ENCODE measurements at regions of chr1 and their contacts with region 1.

Region 1: GRCh38 chr1:153990468-153991150 is at the start of gene RPS27:
- DNase-seq: peak; percentile 100
- H3K4me3 Mint-ChIP-seq: peak within 1 kb of the TSS; percentile 90
- H3K27ac Mint-ChIP-seq: peak within 1 kb of the TSS; percentile 98
- H3K4me1 Mint-ChIP-seq: peaks cover 33% of the 10 kb centered on the region
- H3K27me3 Mint-ChIP-seq: no peaks in the 10 kb centered on the region
- CTCF ChIP-seq: no peak
- total RNA-seq, gene RPS27: 3,026 and 3,064 TPM in 2 replicates

Region 2: GRCh38 chr1:153532769-153533599 is 457.6 kb before region 1 on chr1:
- CTCF ChIA-PET with region 1: interaction called, 4 read pairs
- POLR2A ChIA-PET with region 1: interaction called, 11 read pairs
- intact Hi-C with region 1: no loop called
- DNase-seq: peak; percentile 97
- H3K4me3 Mint-ChIP-seq: peak overlapping the region; percentile 99
- H3K27ac Mint-ChIP-seq: peak overlapping the region; percentile 75
- H3K4me1 Mint-ChIP-seq: peaks cover 47% of the 10 kb centered on the region
- H3K27me3 Mint-ChIP-seq: no peaks in the 10 kb centered on the region
- CTCF ChIP-seq: peak; percentile 93

Region 3: GRCh38 chr1:153670859-153671627 is 319.6 kb before region 1 on chr1 and contains the start of gene ILF2:
- CTCF ChIA-PET with region 1: interaction called, 24 read pairs
- POLR2A ChIA-PET with region 1: interaction called, 15 read pairs
- intact Hi-C with region 1: no loop called
- DNase-seq: peak; percentile 100
- H3K4me3 Mint-ChIP-seq: no peak within 1 kb of the TSS
- H3K27ac Mint-ChIP-seq: no peak within 1 kb of the TSS
- H3K4me1 Mint-ChIP-seq: peaks cover 5% of the 10 kb centered on the region
- H3K27me3 Mint-ChIP-seq: no peaks in the 10 kb centered on the region
- CTCF ChIP-seq: peak; percentile 27
- total RNA-seq, gene ILF2: 348 and 374 TPM in 2 replicates

Region 4: DNA sequence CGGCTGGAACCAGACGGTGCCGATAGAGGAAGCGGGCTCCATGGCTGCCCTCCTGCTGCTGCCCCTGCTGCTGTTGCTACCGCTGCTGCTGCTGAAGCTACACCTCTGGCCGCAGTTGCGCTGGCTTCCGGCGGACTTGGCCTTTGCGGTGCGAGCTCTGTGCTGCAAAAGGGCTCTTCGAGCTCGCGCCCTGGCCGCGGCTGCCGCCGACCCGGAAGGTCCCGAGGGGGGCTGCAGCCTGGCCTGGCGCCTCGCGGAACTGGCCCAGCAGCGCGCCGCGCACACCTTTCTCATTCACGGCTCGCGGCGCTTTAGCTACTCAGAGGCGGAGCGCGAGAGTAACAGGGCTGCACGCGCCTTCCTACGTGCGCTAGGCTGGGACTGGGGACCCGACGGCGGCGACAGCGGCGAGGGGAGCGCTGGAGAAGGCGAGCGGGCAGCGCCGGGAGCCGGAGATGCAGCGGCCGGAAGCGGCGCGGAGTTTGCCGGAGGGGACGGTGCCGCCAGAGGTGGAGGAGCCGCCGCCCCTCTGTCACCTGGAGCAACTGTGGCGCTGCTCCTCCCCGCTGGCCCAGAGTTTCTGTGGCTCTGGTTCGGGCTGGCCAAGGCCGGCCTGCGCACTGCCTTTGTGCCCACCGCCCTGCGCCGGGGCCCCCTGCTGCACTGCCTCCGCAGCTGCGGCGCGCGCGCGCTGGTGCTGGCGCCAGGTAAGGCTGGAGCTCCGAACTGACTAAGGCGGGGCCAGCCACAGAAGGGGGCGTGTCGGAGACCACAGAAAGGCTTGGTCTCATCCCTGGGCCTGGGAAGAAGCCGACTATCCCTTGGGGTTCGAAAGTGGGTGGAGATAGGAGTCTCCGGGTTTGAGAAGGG is 214.9 kb before region 1 on chr1:
- CTCF ChIA-PET with region 1: interaction called, 6 read pairs
- POLR2A ChIA-PET with region 1: interaction called, 18 read pairs
- intact Hi-C with region 1: loop called (anchors 1 kb)
- DNase-seq: peak; percentile 81
- H3K4me3 Mint-ChIP-seq: peak overlapping the region; percentile 70
- H3K27ac Mint-ChIP-seq: peak overlapping the region; percentile 68
- H3K4me1 Mint-ChIP-seq: peaks cover 36% of the 10 kb centered on the region
- H3K27me3 Mint-ChIP-seq: no peaks in the 10 kb centered on the region
- CTCF ChIP-seq: no peak

Region 5: DNA sequence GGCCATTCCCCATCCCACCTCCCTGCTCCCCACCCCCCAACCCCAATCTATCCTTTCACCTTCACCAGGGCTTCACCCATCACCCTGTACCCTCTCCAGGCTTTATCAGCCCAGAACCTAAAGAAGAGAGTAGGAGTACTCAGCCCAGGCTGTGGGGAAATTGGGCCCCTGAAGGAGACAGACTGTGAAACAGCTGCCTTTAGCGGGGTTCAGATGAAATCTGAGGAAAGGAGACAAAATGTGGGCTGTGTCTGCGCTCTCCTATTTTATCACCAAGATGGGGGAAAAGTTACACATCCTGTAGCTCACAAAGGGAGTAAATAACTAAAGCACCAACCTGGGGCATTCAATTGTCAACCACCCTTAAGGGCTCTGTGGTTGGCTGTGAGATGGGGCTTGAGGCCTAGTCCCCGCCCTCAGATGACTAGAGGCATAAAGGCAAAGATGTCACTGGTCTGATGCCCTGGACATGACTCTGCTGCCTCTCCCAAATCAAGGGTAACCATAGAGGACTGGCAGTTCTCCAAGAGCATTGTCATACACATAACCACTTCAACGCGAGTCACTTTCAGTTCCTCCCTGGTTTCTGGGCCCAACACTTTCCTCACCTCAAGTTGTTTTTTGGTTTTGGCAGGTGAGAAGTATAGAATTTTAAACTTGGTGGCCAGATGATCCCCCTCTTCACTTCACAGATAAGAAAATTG is 185.4 kb before region 1 on chr1:
- CTCF ChIA-PET with region 1: interaction called, 22 read pairs
- POLR2A ChIA-PET with region 1: interaction called, 9 read pairs
- intact Hi-C with region 1: no loop called
- DNase-seq: peak; percentile 95
- H3K4me3 Mint-ChIP-seq: peak overlapping the region; percentile 60
- H3K27ac Mint-ChIP-seq: peak overlapping the region; percentile 99
- H3K4me1 Mint-ChIP-seq: peaks cover 32% of the 10 kb centered on the region
- H3K27me3 Mint-ChIP-seq: no peaks in the 10 kb centered on the region
- CTCF ChIP-seq: no peak

Region 6: GRCh38 chr1:153946622-153947241 is 43.9 kb before region 1 on chr1 and contains the start of gene DENND4B:
- CTCF ChIA-PET with region 1: interaction called, 13 read pairs
- POLR2A ChIA-PET with region 1: interaction called, 40 read pairs
- intact Hi-C with region 1: loop called (anchors 5 kb)
- DNase-seq: peak; percentile 88
- H3K4me3 Mint-ChIP-seq: peak within 1 kb of the TSS; percentile 90
- H3K27ac Mint-ChIP-seq: peak within 1 kb of the TSS; percentile 88
- H3K4me1 Mint-ChIP-seq: peaks cover 21% of the 10 kb centered on the region
- H3K27me3 Mint-ChIP-seq: no peaks in the 10 kb centered on the region
- CTCF ChIP-seq: peak; percentile 98
- total RNA-seq, gene DENND4B: 59.6 and 79.1 TPM in 2 replicates

Region 7: DNA sequence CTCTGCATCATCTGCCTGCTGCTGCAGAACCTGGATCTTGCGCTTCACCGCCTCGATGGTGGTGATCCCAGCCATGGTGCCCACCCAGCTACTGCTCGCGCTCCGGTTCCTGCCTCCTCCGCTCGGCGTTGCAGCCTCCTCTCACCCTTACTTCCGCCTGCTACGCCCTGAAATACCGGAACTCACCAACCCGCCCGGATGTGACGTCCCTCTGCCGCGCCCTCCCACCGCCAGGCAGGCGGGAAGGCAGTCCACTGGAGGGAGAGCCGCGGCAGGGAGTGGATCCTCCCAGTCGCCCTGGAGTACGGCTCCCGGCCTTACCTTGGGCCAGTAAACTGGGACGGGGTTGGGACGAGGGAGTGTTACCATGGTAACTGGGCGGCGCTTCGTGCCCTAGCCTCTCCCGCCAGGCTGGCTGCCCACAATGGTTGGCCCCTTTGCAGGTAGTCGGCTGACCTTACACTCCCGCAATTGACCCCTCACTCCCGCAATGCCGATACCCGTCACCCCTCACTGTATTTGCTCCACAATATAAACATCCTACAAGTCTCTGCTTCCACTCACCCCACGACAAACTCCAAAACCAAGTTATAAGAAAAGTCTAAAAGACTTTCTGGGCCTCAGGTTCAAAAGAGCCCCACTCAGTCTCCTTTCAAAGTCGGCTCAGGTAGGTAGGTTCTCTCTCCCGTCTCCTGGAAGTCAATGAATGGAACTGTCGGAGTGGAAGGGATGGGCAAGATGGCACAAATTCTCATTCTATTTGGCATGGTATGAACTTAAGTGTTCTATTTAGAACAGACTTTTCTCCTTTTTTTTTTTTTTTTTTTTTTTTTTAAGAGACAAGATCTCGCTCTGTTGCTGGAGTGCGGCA is 192.7 kb after region 1 on chr1:
- CTCF ChIA-PET with region 1: interaction called, 3 read pairs
- POLR2A ChIA-PET with region 1: interaction called, 43 read pairs
- intact Hi-C with region 1: loop called (anchors 1 kb)
- DNase-seq: peak; percentile 99
- H3K4me3 Mint-ChIP-seq: peak overlapping the region; percentile 92
- H3K27ac Mint-ChIP-seq: peak overlapping the region; percentile 96
- H3K4me1 Mint-ChIP-seq: peaks cover 27% of the 10 kb centered on the region
- H3K27me3 Mint-ChIP-seq: no peaks in the 10 kb centered on the region
- CTCF ChIP-seq: no peak